K562 (cell line): ENCODE measurements at regions of chr10 and their contacts with region 1.

Region 1: DNA sequence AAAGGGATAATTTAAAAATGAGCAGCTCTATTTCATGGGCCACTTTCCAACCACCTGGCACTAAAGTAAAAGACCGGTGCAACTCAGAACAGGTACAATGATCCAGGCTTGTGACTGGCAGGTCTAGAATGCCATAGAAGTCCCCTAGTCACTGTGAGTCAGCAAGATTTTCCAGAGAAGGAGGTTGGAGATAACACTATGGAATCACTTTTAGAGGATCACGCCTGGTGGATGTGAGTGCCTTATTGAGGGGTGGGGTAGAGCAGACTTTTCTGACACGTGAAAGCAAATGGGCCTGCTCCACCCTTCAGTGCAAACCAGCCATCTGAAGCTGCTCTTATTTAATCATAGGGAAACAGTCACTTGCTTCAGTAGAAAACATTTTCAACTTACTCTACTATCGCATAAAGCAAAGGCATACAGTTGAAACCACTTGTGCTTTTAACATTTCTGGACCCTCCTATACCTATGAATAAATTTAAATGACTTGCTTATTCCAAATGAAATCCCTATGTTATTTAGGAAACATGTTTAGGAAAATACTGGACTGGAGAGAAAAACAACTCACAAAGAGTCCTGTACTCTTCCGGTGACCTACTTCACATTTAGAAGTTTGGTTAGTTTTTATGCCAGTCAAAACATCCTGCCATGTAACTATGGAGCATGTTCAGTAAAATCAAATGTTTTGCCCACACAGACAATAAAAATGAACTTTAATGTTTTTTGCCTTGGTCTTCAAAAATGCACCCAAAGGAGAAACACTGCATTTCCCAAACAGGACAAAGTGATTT is 21.5 kb upstream of the AKR1C1 start:
- DNase-seq: peak; percentile 72 to 93 (median 78)
- ATAC-seq: peak; percentile 93
- H3K4me3 ChIP-seq: no peak overlapping the region
- H3K27ac ChIP-seq: peak overlapping the region; percentile 74
- H3K4me1 ChIP-seq: peaks cover 0 to 27% of the 10 kb centered on the region in 2 experiments; a peak in 4 of 5 replicates
- H3K27me3 ChIP-seq: no peaks in the 10 kb centered on the region
- CTCF ChIP-seq: no peak
- EP300 ChIP-seq: peak; percentile 91
- POLR2A ChIP-seq: no peak
- RAD21 ChIP-seq: peak in 1 of 2 experiments; percentile 35; a peak in 1 of 4 replicates

Region 2: DNA sequence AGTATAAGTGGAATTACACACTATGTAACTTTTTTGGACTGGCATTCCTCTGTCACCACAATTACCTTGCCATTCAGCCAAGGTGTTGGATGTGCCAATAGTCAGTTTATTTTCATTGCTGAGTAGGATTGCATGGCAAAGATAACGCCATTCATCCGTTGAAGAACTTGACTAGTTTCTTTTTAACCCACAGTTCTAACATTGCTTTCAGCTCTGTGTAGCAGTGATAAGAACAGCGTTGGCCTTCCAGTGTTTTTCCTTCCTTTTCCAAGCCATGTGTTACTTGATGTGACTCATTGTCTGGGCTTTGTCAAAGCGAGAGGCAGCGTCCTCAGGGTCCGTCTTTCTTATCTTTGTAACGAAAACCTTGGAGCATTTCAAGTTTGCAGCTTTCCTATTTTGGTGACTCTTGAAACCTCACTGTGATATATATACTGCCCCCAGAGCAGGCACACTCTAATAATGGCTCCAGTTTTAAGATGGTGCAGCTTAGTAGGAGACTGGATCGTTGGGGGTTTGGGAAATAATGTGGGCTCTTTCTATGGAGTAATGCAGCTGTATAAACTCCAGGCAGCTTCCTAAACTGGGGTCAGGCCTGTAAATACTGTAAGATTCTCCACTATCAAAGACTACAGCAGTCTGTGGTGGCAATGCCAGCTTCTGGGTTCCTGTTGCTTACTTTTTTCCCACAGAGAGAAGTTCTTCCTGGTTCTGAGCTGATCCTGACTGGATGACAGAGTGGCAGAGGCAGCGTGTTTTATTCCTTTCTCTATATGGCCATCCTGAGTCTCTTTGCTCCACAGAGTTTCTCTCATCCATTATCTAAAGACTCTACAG is 74.0 kb before region 1 on chr10:
- CTCF ChIA-PET with region 1: no interaction called
- POLR2A ChIA-PET with region 1: no interaction called
- in situ Hi-C with region 1: no loop called
- intact Hi-C with region 1: loop called (anchors 1 kb)
- DNase-seq: peak; percentile 79 to 96 (median 82)
- ATAC-seq: peak; percentile 87
- H3K4me3 ChIP-seq: peak overlapping the region; percentile 5; the same call in 1 of the 2 replicates
- H3K27ac ChIP-seq: peak overlapping the region; percentile 95
- H3K4me1 ChIP-seq: peaks cover 13 to 45% of the 10 kb centered on the region in 2 experiments; a peak in 4 of 5 replicates
- H3K27me3 ChIP-seq: no peaks in the 10 kb centered on the region
- CTCF ChIP-seq: no peak
- EP300 ChIP-seq: peak; percentile 99
- POLR2A ChIP-seq: peak; percentile 55
- RAD21 ChIP-seq: peak in 1 of 2 experiments; percentile 37; a peak in 1 of 4 replicates

Region 3: GRCh38 chr10:4926400-4926799 is 15.3 kb before region 1 on chr10:
- CTCF ChIA-PET with region 1: no interaction called
- POLR2A ChIA-PET with region 1: no interaction called
- in situ Hi-C with region 1: no loop called
- intact Hi-C with region 1: no loop called
- DNase-seq: no peak
- ATAC-seq: no peak
- H3K4me3 ChIP-seq: no peak overlapping the region
- H3K27ac ChIP-seq: no peak overlapping the region
- H3K4me1 ChIP-seq: no peaks in the 10 kb centered on the region; a peak in 1 of 5 replicates
- H3K27me3 ChIP-seq: no peaks in the 10 kb centered on the region
- CTCF ChIP-seq: no peak
- EP300 ChIP-seq: no peak
- POLR2A ChIP-seq: no peak
- RAD21 ChIP-seq: no peak

Region 4: GRCh38 chr10:5023177-5023805 is 81.6 kb after region 1 on chr10:
- CTCF ChIA-PET with region 1: no interaction called
- POLR2A ChIA-PET with region 1: no interaction called
- in situ Hi-C with region 1: loop called (anchors 5 kb)
- intact Hi-C with region 1: no loop called
- DNase-seq: no peak
- ATAC-seq: no peak
- H3K4me3 ChIP-seq: no peak overlapping the region
- H3K27ac ChIP-seq: no peak overlapping the region
- H3K4me1 ChIP-seq: peaks cover 0 to 7% of the 10 kb centered on the region in 2 experiments; a peak in 2 of 5 replicates
- H3K27me3 ChIP-seq: no peaks in the 10 kb centered on the region
- CTCF ChIP-seq: no peak
- EP300 ChIP-seq: no peak
- POLR2A ChIP-seq: no peak
- RAD21 ChIP-seq: no peak